ENCODE measurements at regions of chr10 and their contacts with region 1.

Region 1: GRCh38 chr10:103111031-103111917 is 81.8 kb downstream of the NT5C2 start:
- DNase-seq: peak in 1 of 42 donors; percentile 17

Region 2: DNA sequence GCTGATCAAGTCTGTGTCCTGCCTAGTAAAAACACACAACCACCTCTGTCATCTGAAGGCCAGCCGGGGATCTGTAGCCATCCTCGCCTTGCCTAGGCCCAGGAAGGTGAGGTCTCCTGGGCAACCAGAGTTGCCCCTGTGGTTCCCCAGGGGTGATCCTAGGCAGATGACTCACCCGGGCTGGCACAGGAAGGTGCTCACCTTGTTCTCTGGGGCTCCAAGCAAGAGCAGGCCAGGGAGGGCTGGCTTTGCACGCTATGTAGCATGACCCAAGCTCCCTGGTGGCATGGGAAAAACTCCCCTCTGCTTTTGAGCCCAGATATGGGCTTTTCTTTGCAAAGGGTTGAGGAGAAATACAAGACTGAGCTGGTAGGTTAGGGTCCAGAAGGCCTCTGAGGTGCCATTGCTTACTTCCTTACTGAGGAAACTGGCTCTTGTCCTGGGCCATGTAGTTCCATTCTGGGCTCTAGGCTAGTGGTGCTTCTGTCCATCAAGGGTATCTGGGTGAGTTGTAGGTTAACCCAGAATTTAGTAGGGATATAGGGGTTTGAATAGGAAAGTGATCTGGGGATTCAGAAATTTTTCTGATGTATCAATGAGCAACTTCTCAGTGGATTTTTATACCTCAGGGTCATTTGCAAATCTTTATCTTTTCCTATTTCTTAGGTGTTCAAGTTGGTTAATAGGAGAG is 30.2 kb before region 1 on chr10:
- intact Hi-C with region 1: no loop called
- DNase-seq: no peak

Region 3: DNA sequence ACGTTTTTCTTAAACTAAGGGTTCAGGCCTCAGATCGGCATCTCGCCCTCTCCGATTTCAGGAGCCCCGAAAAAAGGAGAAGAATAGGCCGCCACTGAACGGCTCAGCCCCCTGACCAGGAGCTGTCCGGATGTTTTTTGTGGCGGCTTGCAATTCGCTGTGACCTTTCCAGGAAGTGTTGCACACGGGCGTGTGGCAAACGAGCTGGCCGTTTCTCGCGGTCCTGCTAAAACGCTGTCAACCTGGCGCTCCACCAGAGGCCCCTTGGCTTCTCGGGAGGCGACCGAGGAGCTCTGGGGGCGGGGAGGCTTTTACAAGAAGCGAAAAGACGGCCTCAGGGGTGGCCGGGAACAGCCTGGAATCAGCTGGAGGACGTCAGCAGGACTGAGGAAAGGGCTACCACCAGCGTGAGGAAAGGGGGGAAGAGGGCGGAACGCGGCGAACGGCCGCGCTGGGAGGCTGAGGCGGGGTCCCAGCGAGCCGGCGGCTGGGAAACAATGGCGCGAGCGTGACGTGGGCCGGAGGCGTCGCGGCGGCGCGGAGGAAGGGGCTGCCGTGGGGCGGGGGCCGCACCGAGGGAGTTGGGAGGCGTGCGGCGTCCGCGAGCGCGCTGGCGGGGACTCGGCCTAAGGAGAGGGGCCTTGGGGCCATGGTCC is 81.3 kb after region 1 on chr10:
- intact Hi-C with region 1: loop called (anchors 10 kb)
- DNase-seq: peak; percentile 42 to 83 (median 67)

Measured in head of caudate nucleus (tissue), 42 donors.